ENCODE measurements at regions of chr7 and their contacts with region 1.

Region 1: DNA sequence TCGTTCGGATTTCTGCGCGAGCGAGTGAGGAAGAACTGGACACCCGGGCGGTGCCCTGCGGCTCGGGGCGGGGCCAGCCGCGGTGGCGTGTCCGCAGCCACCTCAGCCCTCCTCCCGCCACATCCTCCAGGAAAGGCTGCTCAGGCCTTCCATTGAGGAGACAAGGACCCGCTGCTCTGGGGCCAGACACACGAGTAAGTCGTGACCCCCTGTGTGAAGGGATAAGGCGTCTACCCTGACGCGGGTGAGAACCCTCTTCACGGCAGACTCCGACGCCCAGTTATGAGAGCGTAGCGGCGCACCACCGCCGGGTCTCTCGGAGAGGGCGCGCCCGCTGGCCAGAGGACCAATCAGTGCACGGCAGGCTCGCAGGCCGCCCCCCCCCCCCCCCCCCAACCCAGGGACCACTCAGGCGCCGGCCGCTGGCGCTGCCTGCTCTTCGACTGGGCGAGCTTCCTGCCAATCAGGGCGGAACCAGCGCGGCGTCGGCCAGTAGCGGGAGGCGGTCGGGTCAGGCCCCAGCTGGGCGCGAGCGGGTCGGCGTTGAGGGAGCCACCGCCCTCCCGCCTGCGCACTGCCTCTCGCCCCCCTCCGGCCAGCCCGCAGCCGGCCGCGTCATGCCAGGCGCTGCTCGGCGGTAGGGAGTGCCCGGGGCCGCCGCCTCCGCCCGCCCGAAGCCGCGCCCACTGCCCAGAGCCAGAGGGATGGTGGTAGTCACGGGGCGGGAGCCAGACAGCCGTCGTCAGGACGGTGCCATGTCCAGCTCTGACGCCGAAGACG is at the start of gene KCTD7:
- DNase-seq: peak; percentile 96
- ATAC-seq: peak; percentile 87 to 96 (median 88)
- H3K4me3 ChIP-seq: peak within 1 kb of the TSS; percentile 66
- H3K4me3 Mint-ChIP-seq: peak within 1 kb of the TSS; percentile 88
- H3K27ac ChIP-seq: peak within 1 kb of the TSS; percentile 90
- H3K27ac Mint-ChIP-seq: peak within 1 kb of the TSS; percentile 77 to 89
- H3K4me1 ChIP-seq: peaks cover 53% of the 10 kb centered on the region
- H3K4me1 Mint-ChIP-seq: peaks cover 43 to 45% of the 10 kb centered on the region in 2 donors
- H3K27me3 ChIP-seq: no peaks in the 10 kb centered on the region
- H3K27me3 Mint-ChIP-seq: no peaks in the 10 kb centered on the region
- CTCF ChIP-seq: no peak
- total RNA-seq, gene KCTD7: 29.3 to 33.0 (median 31.7) TPM

Region 2: GRCh38 chr7:66198469-66198868 is 430.1 kb before region 1 on chr7:
- intact Hi-C with region 1: no loop called
- DNase-seq: no peak
- ATAC-seq: no peak
- H3K4me3 ChIP-seq: no peak overlapping the region
- H3K4me3 Mint-ChIP-seq: no peak overlapping the region
- H3K27ac ChIP-seq: no peak overlapping the region
- H3K27ac Mint-ChIP-seq: no peak overlapping the region
- H3K4me1 ChIP-seq: no peaks in the 10 kb centered on the region
- H3K4me1 Mint-ChIP-seq: peaks cover 7 to 8% of the 10 kb centered on the region in 2 donors
- H3K27me3 ChIP-seq: no peaks in the 10 kb centered on the region
- H3K27me3 Mint-ChIP-seq: no peaks in the 10 kb centered on the region
- CTCF ChIP-seq: no peak

Region 3: GRCh38 chr7:66307591-66308215 is 320.8 kb before region 1 on chr7:
- intact Hi-C with region 1: no loop called
- DNase-seq: no peak
- ATAC-seq: no peak
- H3K4me3 ChIP-seq: no peak overlapping the region
- H3K4me3 Mint-ChIP-seq: no peak overlapping the region
- H3K27ac ChIP-seq: no peak overlapping the region
- H3K27ac Mint-ChIP-seq: no peak overlapping the region
- H3K4me1 ChIP-seq: no peaks in the 10 kb centered on the region
- H3K4me1 Mint-ChIP-seq: no peaks in the 10 kb centered on the region
- H3K27me3 ChIP-seq: no peaks in the 10 kb centered on the region
- H3K27me3 Mint-ChIP-seq: no peaks in the 10 kb centered on the region
- CTCF ChIP-seq: no peak

Region 4: GRCh38 chr7:66493235-66494181 is 135.0 kb before region 1 on chr7:
- intact Hi-C with region 1: loop called (anchors 2 kb)
- DNase-seq: peak; percentile 94 to 99
- ATAC-seq: peak; percentile 92 to 98 (median 93)
- H3K4me3 ChIP-seq: peak overlapping the region; percentile 71
- H3K4me3 Mint-ChIP-seq: peak overlapping the region; percentile 90
- H3K27ac ChIP-seq: peak overlapping the region; percentile 92
- H3K27ac Mint-ChIP-seq: peak overlapping the region; percentile 98
- H3K4me1 ChIP-seq: peaks cover 17% of the 10 kb centered on the region
- H3K4me1 Mint-ChIP-seq: peaks cover 9 to 16% of the 10 kb centered on the region in 2 donors
- H3K27me3 ChIP-seq: no peaks in the 10 kb centered on the region
- H3K27me3 Mint-ChIP-seq: no peaks in the 10 kb centered on the region
- CTCF ChIP-seq: peak; percentile 27

Region 5: DNA sequence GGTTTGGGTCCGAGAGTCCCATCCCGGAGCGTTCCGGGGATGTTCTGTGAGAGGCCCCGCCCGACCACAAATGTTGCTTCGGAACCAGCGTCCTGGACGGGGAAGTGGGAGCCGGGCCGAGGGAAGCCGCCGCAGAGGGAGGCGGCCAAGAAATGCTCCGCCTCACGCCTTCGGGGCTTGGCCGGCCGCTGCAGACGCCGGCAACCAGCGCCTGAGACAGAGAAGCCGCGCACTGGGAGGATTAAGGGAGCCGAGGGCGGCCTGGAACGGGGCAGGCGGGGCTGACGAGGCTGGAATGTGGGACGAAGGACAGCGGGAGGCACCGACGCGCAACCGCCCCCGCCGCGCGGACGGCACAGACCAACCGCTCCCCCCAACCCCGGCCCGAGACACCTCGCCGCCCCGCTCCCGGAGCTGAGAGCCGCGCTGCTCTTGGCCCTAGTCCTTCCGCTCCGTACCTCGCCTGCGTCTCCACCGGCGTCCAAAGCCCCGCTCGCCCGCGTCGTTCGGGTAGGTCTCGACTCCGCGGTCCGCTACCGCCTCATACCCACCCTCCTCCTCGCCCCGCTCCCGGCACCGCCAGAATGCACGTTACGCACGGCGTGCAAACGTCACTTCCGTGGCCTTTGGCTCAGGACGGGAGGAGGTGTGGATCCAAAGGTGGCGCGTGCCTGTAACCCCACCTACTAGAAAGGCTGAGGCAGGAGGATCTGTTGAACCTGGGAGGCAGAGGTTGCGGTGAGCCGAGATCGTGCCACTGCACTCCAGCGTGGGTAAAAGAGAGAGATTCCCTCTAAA is 36.6 kb before region 1 on chr7:
- intact Hi-C with region 1: loop called (anchors 2 kb)
- DNase-seq: peak; percentile 79 to 95
- ATAC-seq: peak; percentile 94 to 97 (median 95)
- H3K4me3 ChIP-seq: peak overlapping the region; percentile 92
- H3K4me3 Mint-ChIP-seq: peak overlapping the region; percentile 90
- H3K27ac ChIP-seq: peak overlapping the region; percentile 82
- H3K27ac Mint-ChIP-seq: peak overlapping the region; percentile 93 to 97
- H3K4me1 ChIP-seq: peaks cover 30% of the 10 kb centered on the region
- H3K4me1 Mint-ChIP-seq: peaks cover 33 to 50% of the 10 kb centered on the region in 2 donors
- H3K27me3 ChIP-seq: no peaks in the 10 kb centered on the region
- H3K27me3 Mint-ChIP-seq: no peaks in the 10 kb centered on the region
- CTCF ChIP-seq: no peak

Region 6: DNA sequence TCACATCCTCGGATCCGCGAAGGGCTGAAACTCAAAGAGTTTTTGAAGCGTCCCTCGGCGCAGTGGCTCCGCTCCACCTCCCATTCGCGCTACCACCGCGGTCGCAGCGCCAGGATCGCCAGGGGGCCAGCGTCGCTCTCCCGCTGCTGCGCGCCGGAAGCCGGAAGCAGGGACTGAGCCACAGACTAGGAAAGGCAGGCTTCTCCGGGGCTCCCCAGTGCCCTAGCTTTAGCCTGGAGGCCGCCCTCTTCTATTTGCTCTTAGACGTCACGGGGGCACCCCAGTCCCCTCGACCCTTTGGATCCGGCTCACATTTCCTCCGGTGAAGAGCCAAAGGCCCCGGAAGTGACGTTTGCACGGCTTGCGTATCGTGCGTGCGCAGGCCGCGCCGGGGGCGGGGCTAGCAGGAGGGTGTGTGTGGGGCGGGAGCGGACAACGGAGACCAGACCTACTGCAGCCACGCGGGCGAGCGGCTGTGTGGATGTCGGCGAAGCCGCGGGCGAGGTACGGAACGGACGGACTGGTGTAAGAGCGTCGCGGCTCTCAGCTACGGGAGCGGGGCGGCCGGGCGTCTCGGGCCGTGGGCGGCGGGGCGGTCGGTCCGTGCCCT is 25.7 kb after region 1 on chr7:
- intact Hi-C with region 1: loop called (anchors 1 kb)
- DNase-seq: peak; percentile 98 to 99
- ATAC-seq: peak; percentile 93 to 98 (median 95)
- H3K4me3 ChIP-seq: peak overlapping the region; percentile 99
- H3K4me3 Mint-ChIP-seq: peak overlapping the region; percentile 96
- H3K27ac ChIP-seq: peak overlapping the region; percentile 99
- H3K27ac Mint-ChIP-seq: peak overlapping the region; percentile 98 to 99
- H3K4me1 ChIP-seq: peaks cover 21% of the 10 kb centered on the region
- H3K4me1 Mint-ChIP-seq: peaks cover 10 to 32% of the 10 kb centered on the region in 2 donors
- H3K27me3 ChIP-seq: no peaks in the 10 kb centered on the region
- H3K27me3 Mint-ChIP-seq: no peaks in the 10 kb centered on the region
- CTCF ChIP-seq: no peak

Region 7: DNA sequence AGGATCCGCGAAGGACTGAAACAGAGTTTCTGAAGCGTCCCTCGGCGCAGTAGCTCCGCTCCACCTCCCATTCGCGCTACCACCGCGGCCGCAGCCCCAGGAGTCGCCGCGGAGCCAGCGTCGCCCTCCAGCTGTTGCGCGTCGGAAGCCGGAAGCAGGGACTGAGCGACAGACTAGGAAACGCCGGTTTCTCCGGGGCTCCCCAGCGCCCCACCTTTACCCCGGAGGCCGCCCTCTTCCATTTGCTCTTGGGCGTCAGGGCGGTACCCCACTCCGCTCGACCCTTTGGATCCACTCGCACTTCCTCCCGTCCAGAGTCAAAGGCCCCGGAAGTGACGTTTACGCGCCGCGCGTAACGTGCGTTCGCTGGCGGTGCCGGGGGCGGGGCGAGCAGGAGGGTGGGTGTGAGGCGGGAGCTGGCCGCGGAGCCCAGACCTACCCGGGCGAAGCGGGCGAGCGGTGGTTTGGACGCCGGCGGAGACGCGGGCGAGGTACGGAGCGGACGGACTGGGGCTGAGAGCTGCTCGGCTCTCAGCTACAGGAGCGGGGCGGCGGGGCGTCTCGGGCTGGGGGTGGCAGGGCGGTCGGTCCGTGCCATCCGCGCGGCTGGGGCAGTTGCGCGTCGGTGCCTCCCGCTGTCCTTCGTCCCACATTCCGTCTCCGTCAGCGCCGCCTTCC is 111.9 kb after region 1 on chr7 and contains the start of gene RABGEF1:
- intact Hi-C with region 1: loop called (anchors 1 kb)
- DNase-seq: peak; percentile 96 to 99
- ATAC-seq: peak; percentile 86 to 97 (median 88)
- H3K4me3 ChIP-seq: peak within 1 kb of the TSS; percentile 97
- H3K4me3 Mint-ChIP-seq: peak within 1 kb of the TSS; percentile 95
- H3K27ac ChIP-seq: peak within 1 kb of the TSS; percentile 98
- H3K27ac Mint-ChIP-seq: peak within 1 kb of the TSS; percentile 98
- H3K4me1 ChIP-seq: peaks cover 31% of the 10 kb centered on the region
- H3K4me1 Mint-ChIP-seq: peaks cover 38 to 41% of the 10 kb centered on the region in 2 donors
- H3K27me3 ChIP-seq: no peaks in the 10 kb centered on the region
- H3K27me3 Mint-ChIP-seq: no peaks in the 10 kb centered on the region
- CTCF ChIP-seq: no peak
- total RNA-seq, gene RABGEF1: 26.1 to 38.1 (median 31.7) TPM

Region 8: GRCh38 chr7:66920769-66921395 is 292.3 kb after region 1 on chr7 and contains the start of gene TMEM248:
- intact Hi-C with region 1: loop called (anchors 2 kb)
- DNase-seq: peak; percentile 90 to 95
- ATAC-seq: peak; percentile 90 to 94 (median 93)
- H3K4me3 ChIP-seq: peak within 1 kb of the TSS; percentile 65
- H3K4me3 Mint-ChIP-seq: peak within 1 kb of the TSS; percentile 96
- H3K27ac ChIP-seq: peak within 1 kb of the TSS; percentile 86
- H3K27ac Mint-ChIP-seq: peak within 1 kb of the TSS; percentile 97
- H3K4me1 ChIP-seq: peaks cover 27% of the 10 kb centered on the region
- H3K4me1 Mint-ChIP-seq: peaks cover 23 to 24% of the 10 kb centered on the region in 2 donors
- H3K27me3 ChIP-seq: no peaks in the 10 kb centered on the region
- H3K27me3 Mint-ChIP-seq: no peaks in the 10 kb centered on the region
- CTCF ChIP-seq: no peak
- total RNA-seq, gene TMEM248: 97.3 to 105 (median 103) TPM

Measured in natural killer cell (primary cell).